ENCODE measurements at regions of chr5 and their contacts with region 1.

Region 1: DNA sequence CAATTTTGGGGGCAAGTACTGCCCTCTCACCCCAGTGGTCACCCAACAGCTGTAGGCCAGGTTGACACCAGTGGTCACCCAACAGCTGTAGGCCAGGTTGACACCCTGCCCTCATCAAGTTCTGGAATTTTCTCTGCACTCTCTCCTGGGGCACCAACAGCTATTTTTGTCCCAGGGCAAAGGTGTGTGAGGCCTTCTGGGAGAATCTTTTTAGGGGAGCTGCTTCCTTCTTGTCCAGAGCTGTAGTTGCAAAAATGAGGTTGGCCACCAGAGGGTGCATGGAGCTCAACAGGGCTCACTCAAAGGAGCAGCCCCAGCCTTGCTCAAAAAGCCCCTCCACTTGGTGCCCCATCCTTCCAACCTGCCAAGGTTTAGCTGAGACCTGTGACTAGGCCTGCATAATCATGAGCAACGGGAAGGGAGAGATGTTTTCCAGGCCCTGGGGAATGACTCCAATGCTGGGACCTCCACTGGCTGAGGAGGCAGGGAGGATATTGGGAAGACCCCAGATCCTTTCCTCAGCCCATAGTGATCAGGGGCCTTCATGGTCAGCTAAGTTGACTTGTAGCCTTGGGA is 10.6 kb upstream of the P4HA2 start:
- DNase-seq: peak; percentile 72
- CTCF ChIP-seq: peak; percentile 87

Region 2: GRCh38 chr5:131595088-131596033 is 642.9 kb before region 1 on chr5:
- CTCF ChIA-PET with region 1: no interaction called
- POLR2A ChIA-PET with region 1: no interaction called
- DNase-seq: peak; percentile 23
- CTCF ChIP-seq: no peak

Region 3: DNA sequence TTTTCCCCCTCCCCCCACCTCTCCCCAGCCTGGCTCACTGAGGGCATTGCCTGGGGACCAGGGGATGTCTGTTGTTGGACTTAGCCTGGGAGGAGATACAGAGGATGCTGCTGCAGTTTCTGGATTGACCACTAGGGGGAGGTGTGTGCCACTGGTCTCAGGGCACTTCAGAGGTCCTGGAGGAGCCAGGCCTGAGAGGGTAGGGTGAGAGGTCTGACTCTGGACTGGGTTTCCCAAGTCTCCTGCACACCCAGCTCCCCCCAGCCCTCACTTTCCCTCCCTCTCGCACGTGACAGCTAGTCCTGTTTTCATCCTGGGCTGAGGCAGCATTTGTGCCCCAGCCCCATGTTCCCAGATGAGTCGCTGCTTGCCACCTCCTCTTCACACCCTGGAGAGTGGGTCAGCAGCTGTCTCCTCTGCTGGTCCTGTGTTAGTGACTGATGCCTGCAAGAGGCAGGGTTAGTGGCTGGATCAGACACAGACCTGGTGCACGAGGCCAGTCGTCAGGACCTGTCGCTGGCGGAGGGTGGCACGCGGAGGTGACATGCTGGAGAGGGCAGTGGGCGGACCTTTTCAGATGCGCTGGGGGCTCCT is 173.4 kb before region 1 on chr5:
- CTCF ChIA-PET with region 1: interaction called, 15 read pairs
- POLR2A ChIA-PET with region 1: interaction called, 4 read pairs
- DNase-seq: peak; percentile 85
- CTCF ChIP-seq: peak; percentile 91

Region 4: GRCh38 chr5:132083071-132083678 is 155.1 kb before region 1 on chr5:
- CTCF ChIA-PET with region 1: no interaction called
- POLR2A ChIA-PET with region 1: no interaction called
- DNase-seq: no peak
- CTCF ChIP-seq: no peak

Region 5: DNA sequence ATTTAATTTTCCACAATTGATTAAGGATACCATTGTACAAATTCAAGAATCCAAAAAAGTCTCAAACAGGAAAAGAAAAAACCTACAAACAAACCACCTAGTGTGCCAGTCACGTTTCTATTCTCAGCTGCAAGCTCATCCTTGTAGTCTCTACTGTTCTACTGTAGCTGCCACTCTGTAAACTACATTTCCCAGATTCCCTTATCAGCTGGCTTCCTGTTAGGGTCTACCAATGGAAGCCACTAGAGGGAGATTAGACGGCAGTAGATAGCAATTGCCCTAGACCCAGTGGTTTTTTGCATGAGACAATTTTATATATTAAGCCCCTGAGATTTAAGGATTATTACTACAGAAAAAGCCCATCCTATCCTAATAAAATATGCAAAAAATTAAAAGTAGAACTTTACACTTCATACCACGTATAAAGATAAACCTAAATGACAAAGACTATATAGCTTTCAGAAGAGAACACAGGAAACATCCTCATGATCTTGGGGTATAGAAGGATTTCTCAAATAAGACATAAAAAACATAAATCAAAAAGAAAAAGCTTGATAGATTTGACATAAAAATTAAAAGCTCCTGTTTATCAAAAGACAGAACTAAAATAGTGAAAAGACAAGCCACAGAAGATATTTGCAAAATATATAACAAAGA is 48.0 kb before region 1 on chr5:
- CTCF ChIA-PET with region 1: interaction called, 14 read pairs
- POLR2A ChIA-PET with region 1: no interaction called
- DNase-seq: peak; percentile 63
- CTCF ChIP-seq: peak; percentile 52

Region 6: GRCh38 chr5:132215329-132215728 is 22.9 kb before region 1 on chr5:
- CTCF ChIA-PET with region 1: interaction called, 78 read pairs
- POLR2A ChIA-PET with region 1: no interaction called
- DNase-seq: no peak
- CTCF ChIP-seq: no peak

Region 7: DNA sequence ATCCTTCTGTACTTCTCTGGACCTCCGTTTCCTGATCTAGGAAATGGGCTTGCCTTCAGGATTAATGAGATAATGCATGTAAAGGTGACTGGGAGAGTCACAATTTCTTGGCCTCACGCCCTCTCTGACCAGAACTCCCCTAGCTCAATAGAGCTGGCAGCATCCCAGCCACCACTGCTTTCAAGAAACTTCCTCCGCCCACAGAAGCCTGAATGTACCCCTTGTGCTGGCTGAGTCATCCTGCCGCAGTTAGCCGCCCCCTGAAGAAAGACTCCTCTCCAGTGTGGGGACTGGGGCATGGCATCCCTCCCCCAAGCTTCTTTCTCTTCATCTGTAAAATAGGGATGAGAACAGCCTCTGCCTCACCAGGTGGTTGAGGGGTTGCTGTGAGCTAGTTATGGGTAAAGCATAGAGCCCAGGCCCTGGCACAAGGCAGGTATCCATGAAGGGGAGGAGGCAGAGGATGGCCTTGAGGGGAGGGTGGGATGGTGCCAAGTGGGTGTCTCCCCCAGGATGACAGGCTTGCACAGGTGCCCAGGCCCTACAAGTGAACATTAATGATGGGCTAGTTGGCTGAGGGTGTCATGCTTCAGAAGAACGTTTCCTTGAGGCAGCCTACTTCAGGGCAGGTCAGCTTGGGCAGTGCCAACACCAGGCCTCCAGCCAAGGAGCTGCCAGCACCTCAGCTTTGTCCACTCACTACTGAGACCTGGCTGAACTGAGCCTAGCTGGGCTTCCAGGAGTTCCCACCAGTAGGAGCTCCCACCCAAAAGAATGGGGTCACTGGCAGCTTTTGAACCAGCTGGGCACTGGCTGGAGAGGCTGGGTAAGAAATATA is 22.7 kb after region 1 on chr5:
- CTCF ChIA-PET with region 1: interaction called, 104 read pairs
- POLR2A ChIA-PET with region 1: no interaction called
- DNase-seq: peak; percentile 46
- CTCF ChIP-seq: no peak

Region 8: DNA sequence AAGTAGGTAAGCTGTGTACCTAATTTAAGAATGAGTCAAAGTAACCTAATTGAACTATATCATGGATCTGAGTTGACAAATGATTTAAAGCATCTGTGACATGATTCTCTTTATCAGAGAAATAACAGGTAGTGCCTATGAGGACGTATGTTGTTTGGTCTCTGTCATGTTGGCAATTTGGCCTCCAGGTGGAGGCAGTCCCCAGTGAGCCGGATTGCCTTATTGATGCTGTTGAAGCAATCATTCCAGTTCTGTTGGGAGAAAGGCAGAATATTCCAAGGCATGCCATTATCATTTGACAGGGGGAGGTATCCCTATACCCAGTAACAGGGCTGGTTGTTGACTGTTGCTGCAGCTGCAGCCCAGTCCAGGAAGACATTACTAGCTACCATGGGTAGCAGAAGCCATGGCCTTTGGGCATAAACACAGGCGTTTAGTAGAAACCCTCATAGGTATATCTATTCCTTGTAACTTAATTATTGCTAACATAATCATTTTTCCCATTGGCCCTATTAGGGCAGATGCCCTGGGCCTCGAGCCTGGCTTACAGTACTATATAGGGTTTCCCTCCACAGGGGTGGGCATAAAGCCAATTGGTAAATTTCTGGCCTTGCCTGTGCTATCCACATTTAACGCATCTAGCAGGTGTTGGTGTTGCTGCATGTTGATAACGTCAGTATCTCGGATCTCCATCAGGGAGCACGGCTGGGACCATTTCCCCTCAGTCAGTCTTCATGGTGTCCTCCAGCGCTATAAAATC is 43.8 kb after region 1 on chr5:
- CTCF ChIA-PET with region 1: interaction called, 12 read pairs
- POLR2A ChIA-PET with region 1: no interaction called
- DNase-seq: no peak
- CTCF ChIP-seq: no peak

Region 9: GRCh38 chr5:132495667-132496190 is 257.5 kb after region 1 on chr5:
- CTCF ChIA-PET with region 1: interaction called, 26 read pairs
- POLR2A ChIA-PET with region 1: no interaction called
- DNase-seq: peak; percentile 83
- CTCF ChIP-seq: peak; percentile 0